Natural killer cell (primary cell): ENCODE measurements at regions of chr13 and their contacts with region 1.

Region 1: GRCh38 chr13:114143806-114144605 is 11.6 kb upstream of the RASA3 start:
- DNase-seq: peak in 1 of 2 donors; percentile 75
- ATAC-seq: peak; percentile 14 to 30 (median 26)
- H3K4me3 ChIP-seq: no peak overlapping the region
- H3K4me3 Mint-ChIP-seq: peak overlapping the region; percentile 45
- H3K27ac ChIP-seq: peak overlapping the region; percentile 85
- H3K27ac Mint-ChIP-seq: peak overlapping the region in 1 of 2 donors; percentile 67
- H3K4me1 ChIP-seq: peaks cover 99% of the 10 kb centered on the region
- H3K4me1 Mint-ChIP-seq: peaks cover 14 to 41% of the 10 kb centered on the region in 2 donors
- H3K27me3 ChIP-seq: no peaks in the 10 kb centered on the region
- H3K27me3 Mint-ChIP-seq: no peaks in the 10 kb centered on the region
- CTCF ChIP-seq: peak; percentile 47

Region 2: GRCh38 chr13:113879494-113880360 is 264.3 kb before region 1 on chr13:
- intact Hi-C with region 1: loop called (anchors 2 kb)
- DNase-seq: no peak
- ATAC-seq: no peak
- H3K4me3 ChIP-seq: no peak overlapping the region
- H3K4me3 Mint-ChIP-seq: peak overlapping the region; percentile 19
- H3K27ac ChIP-seq: no peak overlapping the region
- H3K27ac Mint-ChIP-seq: no peak overlapping the region
- H3K4me1 ChIP-seq: peaks cover 46% of the 10 kb centered on the region
- H3K4me1 Mint-ChIP-seq: peaks cover 21 to 51% of the 10 kb centered on the region in 2 donors
- H3K27me3 ChIP-seq: no peaks in the 10 kb centered on the region
- H3K27me3 Mint-ChIP-seq: peaks cover 0 to under 1% of the 10 kb centered on the region in 2 donors
- CTCF ChIP-seq: no peak

Region 3: GRCh38 chr13:114010401-114011101 is 133.5 kb before region 1 on chr13:
- intact Hi-C with region 1: no loop called
- DNase-seq: peak in 1 of 2 donors; percentile 51
- ATAC-seq: peak in 2 of 3 donors; percentile 22 to 32
- H3K4me3 ChIP-seq: no peak overlapping the region
- H3K4me3 Mint-ChIP-seq: peak overlapping the region; percentile 17
- H3K27ac ChIP-seq: no peak overlapping the region
- H3K27ac Mint-ChIP-seq: peak overlapping the region; percentile 64 to 74
- H3K4me1 ChIP-seq: no peaks in the 10 kb centered on the region
- H3K4me1 Mint-ChIP-seq: peaks cover 0 to 5% of the 10 kb centered on the region in 2 donors
- H3K27me3 ChIP-seq: no peaks in the 10 kb centered on the region
- H3K27me3 Mint-ChIP-seq: no peaks in the 10 kb centered on the region
- CTCF ChIP-seq: no peak

Region 4: GRCh38 chr13:114065141-114065925 is 78.7 kb before region 1 on chr13:
- intact Hi-C with region 1: loop called (anchors 5 kb)
- DNase-seq: peak; percentile 65 to 81
- ATAC-seq: peak; percentile 64 to 84 (median 76)
- H3K4me3 ChIP-seq: peak overlapping the region; percentile 41
- H3K4me3 Mint-ChIP-seq: peak overlapping the region; percentile 91
- H3K27ac ChIP-seq: peak overlapping the region; percentile 82
- H3K27ac Mint-ChIP-seq: peak overlapping the region; percentile 87 to 95
- H3K4me1 ChIP-seq: peaks cover 78% of the 10 kb centered on the region
- H3K4me1 Mint-ChIP-seq: peaks cover 62 to 78% of the 10 kb centered on the region in 2 donors
- H3K27me3 ChIP-seq: no peaks in the 10 kb centered on the region
- H3K27me3 Mint-ChIP-seq: no peaks in the 10 kb centered on the region
- CTCF ChIP-seq: no peak

Region 5: DNA sequence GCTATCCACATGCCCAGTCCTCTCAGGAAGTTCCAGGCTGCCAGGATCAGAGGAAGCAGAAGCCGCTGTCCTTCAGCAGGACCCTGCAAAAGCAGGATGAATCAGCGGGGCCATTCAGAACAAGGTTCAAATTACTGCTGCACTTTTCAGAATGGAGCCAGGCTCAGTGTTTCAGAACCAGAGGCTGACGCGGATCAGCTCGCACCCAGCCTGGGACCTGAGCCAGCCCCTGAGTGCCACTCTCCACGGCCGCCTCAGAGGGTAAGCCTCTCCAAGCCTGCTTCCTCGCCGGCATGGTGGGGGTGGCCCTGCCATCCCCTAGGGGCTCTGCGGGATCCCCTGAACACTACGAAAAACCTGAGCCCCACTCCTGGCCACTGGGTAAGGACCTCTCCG is 36.3 kb before region 1 on chr13:
- intact Hi-C with region 1: loop called (anchors 5 kb)
- DNase-seq: no peak
- ATAC-seq: no peak
- H3K4me3 ChIP-seq: no peak overlapping the region
- H3K4me3 Mint-ChIP-seq: peak overlapping the region; percentile 86
- H3K27ac ChIP-seq: peak overlapping the region; percentile 78
- H3K27ac Mint-ChIP-seq: peak overlapping the region; percentile 95 to 100
- H3K4me1 ChIP-seq: peaks cover 93% of the 10 kb centered on the region
- H3K4me1 Mint-ChIP-seq: peaks cover 66 to 85% of the 10 kb centered on the region in 2 donors
- H3K27me3 ChIP-seq: no peaks in the 10 kb centered on the region
- H3K27me3 Mint-ChIP-seq: no peaks in the 10 kb centered on the region
- CTCF ChIP-seq: no peak

Region 6: GRCh38 chr13:114132419-114133121 is 11.4 kb before region 1 on chr13 and contains the start of gene RASA3:
- intact Hi-C with region 1: loop called (anchors 1 kb)
- DNase-seq: peak; percentile 63 to 80
- ATAC-seq: peak; percentile 51 to 72 (median 64)
- H3K4me3 ChIP-seq: peak within 1 kb of the TSS; percentile 97
- H3K4me3 Mint-ChIP-seq: peak within 1 kb of the TSS; percentile 98
- H3K27ac ChIP-seq: peak within 1 kb of the TSS; percentile 84
- H3K27ac Mint-ChIP-seq: peak within 1 kb of the TSS; percentile 91 to 92
- H3K4me1 ChIP-seq: peaks cover 48% of the 10 kb centered on the region
- H3K4me1 Mint-ChIP-seq: peaks cover 53 to 66% of the 10 kb centered on the region in 2 donors
- H3K27me3 ChIP-seq: no peaks in the 10 kb centered on the region
- H3K27me3 Mint-ChIP-seq: no peaks in the 10 kb centered on the region
- CTCF ChIP-seq: no peak
- total RNA-seq, gene RASA3: 252 to 277 (median 274) TPM

Region 7: DNA sequence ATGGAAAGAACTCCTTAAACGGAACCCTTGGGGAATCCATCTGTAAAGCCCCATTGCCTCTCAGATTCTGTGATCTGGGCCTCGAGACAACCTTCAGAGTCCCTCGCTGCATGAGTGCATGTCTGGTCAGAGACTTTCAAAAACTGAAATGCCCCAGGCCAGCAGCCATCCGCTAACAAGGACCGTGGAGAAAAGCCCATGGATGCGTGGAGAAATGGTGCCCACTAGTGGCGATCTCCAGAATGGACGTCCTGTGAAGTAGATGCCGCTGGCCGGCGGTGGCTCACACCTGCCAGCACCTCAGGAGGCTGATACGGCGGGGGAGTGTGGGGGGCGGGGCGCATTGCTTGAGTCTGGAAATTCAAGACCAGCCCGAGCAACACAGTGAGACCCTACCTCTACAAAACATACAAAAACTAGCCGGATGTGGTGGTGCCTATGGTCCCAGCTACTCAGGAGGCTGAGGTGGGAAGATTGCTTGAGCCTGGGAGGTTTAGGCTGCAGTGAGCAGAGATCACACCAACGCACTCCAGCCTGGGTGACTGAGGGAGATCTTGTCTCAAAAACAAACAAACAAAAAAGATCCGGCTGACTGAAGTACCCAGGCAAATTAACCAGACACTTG is 82.8 kb after region 1 on chr13:
- intact Hi-C with region 1: loop called (anchors 2 kb)
- DNase-seq: peak; percentile 81 to 93
- ATAC-seq: peak; percentile 83 to 91 (median 87)
- H3K4me3 ChIP-seq: no peak overlapping the region
- H3K4me3 Mint-ChIP-seq: no peak overlapping the region
- H3K27ac ChIP-seq: no peak overlapping the region
- H3K27ac Mint-ChIP-seq: peak overlapping the region; percentile 19 to 46
- H3K4me1 ChIP-seq: peaks cover 34% of the 10 kb centered on the region
- H3K4me1 Mint-ChIP-seq: peaks cover 29 to 46% of the 10 kb centered on the region in 2 donors
- H3K27me3 ChIP-seq: no peaks in the 10 kb centered on the region
- H3K27me3 Mint-ChIP-seq: peaks cover 4 to 13% of the 10 kb centered on the region in 2 donors
- CTCF ChIP-seq: peak; percentile 87

Region 8: GRCh38 chr13:114259974-114260373 is 116.0 kb after region 1 on chr13:
- intact Hi-C with region 1: loop called (anchors 5 kb)
- DNase-seq: no peak
- ATAC-seq: no peak
- H3K4me3 ChIP-seq: no peak overlapping the region
- H3K4me3 Mint-ChIP-seq: no peak overlapping the region
- H3K27ac ChIP-seq: no peak overlapping the region
- H3K27ac Mint-ChIP-seq: peak overlapping the region in 1 of 2 donors; percentile 37
- H3K4me1 ChIP-seq: peaks cover 43% of the 10 kb centered on the region
- H3K4me1 Mint-ChIP-seq: peaks cover 54 to 63% of the 10 kb centered on the region in 2 donors
- H3K27me3 ChIP-seq: no peaks in the 10 kb centered on the region
- H3K27me3 Mint-ChIP-seq: no peaks in the 10 kb centered on the region
- CTCF ChIP-seq: no peak